ENCODE measurements at regions of chr11 and their contacts with region 1.

Region 1: DNA sequence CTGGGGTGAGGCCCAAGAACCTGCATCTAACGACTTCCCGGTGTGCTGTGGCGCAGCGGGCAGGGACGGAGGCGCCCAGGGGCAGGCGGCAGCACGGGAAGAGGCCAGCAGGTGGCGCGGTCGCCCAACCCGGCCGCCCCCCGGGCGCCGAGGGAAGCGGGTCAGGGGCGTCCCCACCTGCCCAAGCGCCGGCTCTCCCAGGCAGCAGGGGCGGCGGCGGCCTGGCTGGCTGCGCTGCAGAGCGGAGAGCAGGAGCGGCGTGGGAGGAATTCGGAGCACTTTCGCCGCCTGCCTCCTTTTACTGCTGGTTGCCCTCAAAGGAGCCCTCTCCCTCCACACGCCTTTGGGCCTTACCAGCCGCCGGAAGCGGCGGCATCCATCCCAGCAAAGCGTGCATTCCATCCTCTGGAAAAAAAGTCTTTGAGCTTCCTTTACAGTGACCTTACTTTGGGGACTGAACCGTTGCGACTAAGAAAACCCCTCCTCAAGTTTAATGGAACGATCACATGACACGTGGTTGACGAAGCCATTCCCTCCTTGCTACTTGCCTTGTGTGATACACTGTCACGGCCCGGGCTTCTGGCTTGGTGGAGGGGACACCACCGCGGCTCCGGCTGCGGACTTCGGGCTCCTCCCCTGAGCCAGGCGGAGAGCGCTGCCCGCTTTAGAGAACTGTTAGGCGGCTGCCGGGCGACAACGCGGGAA is 106.8 kb upstream of the CLMP start:
- H3K4me3 Mint-ChIP-seq: peak overlapping the region; percentile 77
- H3K27ac Mint-ChIP-seq: peak overlapping the region; percentile 60
- H3K4me1 Mint-ChIP-seq: peaks cover 27% of the 10 kb centered on the region
- H3K27me3 Mint-ChIP-seq: peaks cover 27% of the 10 kb centered on the region

Region 2: GRCh38 chr11:122954455-122954854 is 347.4 kb before region 1 on chr11:
- intact Hi-C with region 1: no loop called
- H3K4me3 Mint-ChIP-seq: no peak overlapping the region
- H3K27ac Mint-ChIP-seq: no peak overlapping the region
- H3K4me1 Mint-ChIP-seq: peaks cover 7% of the 10 kb centered on the region
- H3K27me3 Mint-ChIP-seq: no peaks in the 10 kb centered on the region

Region 3: GRCh38 chr11:123122341-123122740 is 179.5 kb before region 1 on chr11:
- intact Hi-C with region 1: no loop called
- H3K4me3 Mint-ChIP-seq: no peak overlapping the region
- H3K27ac Mint-ChIP-seq: no peak overlapping the region
- H3K4me1 Mint-ChIP-seq: peaks cover 21% of the 10 kb centered on the region
- H3K27me3 Mint-ChIP-seq: peaks cover 3% of the 10 kb centered on the region

Region 4: DNA sequence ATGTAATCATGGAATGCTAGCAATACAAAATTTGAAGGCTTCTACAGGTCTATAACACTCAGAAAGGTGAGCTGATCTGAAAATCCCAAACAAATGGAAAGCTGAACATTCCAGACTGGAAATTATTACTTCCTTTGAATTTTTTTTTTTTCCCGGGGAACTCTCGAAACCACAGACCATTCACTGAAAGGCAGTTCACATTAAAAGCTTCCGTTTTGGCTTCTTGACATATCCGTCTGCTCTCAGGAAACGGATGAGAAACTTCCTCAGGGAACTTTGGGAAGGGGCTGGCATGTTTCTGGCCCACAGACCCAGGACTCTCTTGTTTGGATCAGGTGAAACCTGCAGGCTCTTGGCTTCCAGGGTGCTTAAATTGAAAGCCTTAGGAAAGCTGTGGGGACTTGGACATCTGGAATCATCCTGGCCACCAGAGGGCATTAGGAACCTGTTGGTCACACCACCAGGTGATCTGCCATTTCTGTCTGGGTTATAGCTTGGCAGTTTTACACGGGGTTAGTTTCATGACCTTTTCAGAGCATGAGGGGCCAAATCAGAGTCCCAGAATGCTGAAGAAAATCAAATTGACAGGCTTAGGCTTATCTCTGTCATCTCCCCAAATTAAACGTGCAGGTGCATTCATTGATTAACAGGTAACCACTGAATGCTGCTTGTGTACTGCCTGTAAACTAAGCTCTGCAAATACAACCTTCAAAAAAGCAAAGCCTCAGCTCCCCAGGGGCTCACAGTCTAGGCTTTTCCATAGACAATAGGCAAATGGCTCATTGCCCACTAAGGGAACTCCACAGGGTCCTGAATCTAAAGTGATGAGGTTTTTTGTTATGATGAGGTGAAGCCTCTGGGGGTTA is 105.5 kb after region 1 on chr11:
- intact Hi-C with region 1: loop called (anchors 10 kb)
- H3K4me3 Mint-ChIP-seq: no peak overlapping the region
- H3K27ac Mint-ChIP-seq: no peak overlapping the region
- H3K4me1 Mint-ChIP-seq: peaks cover 24% of the 10 kb centered on the region
- H3K27me3 Mint-ChIP-seq: no peaks in the 10 kb centered on the region

Measured in dendritic cell treated with granulocyte-macrophage colony-stimulating factor and Interleukin-4, amounts not matched to agents 40 ng/mL and 50 ng/mL, for 4 days (primary cell).